ENCODE measurements at regions of chr10 and their contacts with region 1.

Region 1: GRCh38 chr10:102225646-102226541 is at the start of gene ELOVL3:
- DNase-seq: peak; percentile 96
- ATAC-seq: peak; percentile 96 to 97
- total RNA-seq, gene ELOVL3: 1.3 TPM in 1 of 2 donors, not detected in the other

Region 2: DNA sequence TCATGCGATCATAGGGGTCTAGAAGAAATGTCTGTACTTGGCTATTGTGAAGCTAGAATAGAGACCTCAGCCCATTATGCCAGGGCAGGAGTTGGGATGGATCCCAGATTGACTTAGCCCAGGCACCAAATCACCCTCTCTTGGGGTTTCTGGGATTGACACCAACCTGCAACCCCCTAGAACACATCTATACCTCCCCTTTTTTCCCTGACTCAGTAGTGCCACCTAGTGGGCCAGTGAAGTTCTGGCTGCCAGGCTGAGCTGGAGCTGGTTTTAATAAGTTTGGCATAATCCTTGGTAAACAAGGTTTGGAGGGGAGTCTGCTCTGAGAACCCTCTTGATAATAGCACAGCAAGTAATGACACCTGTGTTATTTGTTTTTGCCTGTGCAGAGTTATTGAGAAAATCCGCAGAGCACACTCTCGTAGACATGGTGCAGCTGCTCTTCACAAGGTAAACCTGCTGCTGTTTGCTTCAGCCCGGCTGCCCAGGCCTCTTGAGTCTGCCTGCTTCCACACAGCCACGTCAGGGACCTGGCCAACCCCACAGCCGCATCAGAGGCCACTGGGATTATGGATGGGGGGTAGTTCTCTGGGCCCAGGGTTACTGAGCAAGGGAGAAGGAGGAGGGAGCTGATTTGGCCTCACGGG is 126.3 kb after region 1 on chr10:
- intact Hi-C with region 1: loop called (anchors 2 kb)
- DNase-seq: peak; percentile 44
- ATAC-seq: peak; percentile 65 to 72

Region 3: GRCh38 chr10:102399217-102400089 is 173.6 kb after region 1 on chr10:
- intact Hi-C with region 1: loop called in 1 of 2 experiments (anchors 5 kb)
- DNase-seq: peak; percentile 93
- ATAC-seq: peak; percentile 69 to 83

Measured in left cardiac atrium (tissue), 4 donors.